Sciatic nerve (tissue), 2 donors: ENCODE measurements at regions of chr7 and their contacts with region 1.

Region 1: DNA sequence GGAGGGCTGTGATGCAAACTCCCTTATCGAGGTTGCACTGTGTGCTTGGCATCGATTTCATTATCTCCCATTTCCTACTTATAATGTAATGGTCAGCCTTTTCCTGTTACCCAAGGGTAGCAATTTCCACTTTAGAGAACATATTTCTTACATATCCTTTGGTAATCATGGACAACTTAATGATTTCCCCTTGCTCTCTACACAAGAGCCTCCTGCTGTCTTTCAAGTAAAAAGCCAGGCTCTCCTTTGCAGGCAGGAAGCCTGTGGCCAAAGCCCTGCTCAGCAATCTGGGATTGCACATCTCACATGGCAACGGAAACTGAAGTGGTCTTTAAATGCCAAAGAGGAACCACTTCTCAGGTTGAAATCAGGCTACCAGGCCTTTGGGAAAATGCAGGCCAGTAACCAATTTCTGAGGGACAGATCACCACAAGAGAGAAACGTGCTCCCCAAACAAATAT is 86.7 kb upstream of the IKZF1 start:
- DNase-seq: no peak
- ATAC-seq: no peak

Region 2: GRCh38 chr7:50278120-50278519 is 60.3 kb after region 1 on chr7:
- intact Hi-C with region 1: loop called (anchors 2 kb)
- DNase-seq: no peak
- ATAC-seq: no peak